PC-9 (cell line): ENCODE measurements at regions of chr7 and their contacts with region 1.

Region 1: GRCh38 chr7:83704561-83704960 is 55.6 kb upstream of the SEMA3E start:
- DNase-seq: peak; percentile 59 to 92
- H3K4me3 ChIP-seq: peak overlapping the region; percentile 28; the same call in 1 of the 2 replicates
- H3K27ac ChIP-seq: peak overlapping the region; percentile 85
- H3K4me1 ChIP-seq: peaks cover 28% of the 10 kb centered on the region
- H3K27me3 ChIP-seq: no peaks in the 10 kb centered on the region
- CTCF ChIP-seq: no peak

Region 2: DNA sequence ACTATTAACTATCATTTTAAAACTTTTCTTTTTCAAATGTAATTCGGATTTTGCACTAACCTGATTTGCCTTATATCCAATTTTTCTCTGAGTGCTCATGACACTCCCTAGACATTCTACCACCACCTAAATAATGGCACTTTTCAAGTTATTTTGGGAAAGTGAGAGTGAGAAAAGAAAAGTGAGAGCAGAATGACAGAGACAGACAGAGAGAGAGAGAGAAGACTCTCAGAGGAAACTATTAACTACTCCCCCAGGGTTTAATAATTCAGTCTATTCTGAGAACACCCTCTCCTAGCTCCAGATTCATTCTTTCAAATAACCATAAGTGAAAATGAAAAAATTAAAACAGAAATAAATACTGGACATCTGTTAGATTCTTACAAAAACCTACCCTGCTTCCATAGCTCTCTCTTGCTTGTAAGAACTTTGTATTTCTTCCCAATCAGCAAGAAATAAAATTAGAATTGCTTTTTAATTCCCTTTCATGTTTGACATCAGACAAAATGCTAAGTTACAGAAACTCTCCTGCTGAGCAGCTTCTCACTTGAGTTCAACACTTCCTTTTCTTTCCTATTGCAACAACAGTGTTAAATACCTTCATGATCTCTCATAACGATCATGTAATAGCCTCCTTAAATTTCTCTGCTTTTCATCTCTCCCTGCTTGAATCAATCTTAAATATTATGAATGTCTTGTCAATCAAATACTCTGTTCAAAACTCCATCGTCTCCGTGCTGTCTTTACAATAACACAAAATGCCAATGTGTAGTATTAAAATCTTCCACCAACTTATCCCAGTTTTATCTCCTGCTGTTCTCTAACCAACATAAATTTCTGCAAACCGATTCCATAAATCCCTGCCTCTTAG is 247.3 kb before region 1 on chr7:
- CTCF ChIA-PET with region 1: no interaction called
- POLR2A ChIA-PET with region 1: no interaction called
- intact Hi-C with region 1: no loop called
- DNase-seq: no peak
- H3K4me3 ChIP-seq: no peak overlapping the region
- H3K27ac ChIP-seq: no peak overlapping the region
- H3K4me1 ChIP-seq: no peaks in the 10 kb centered on the region
- H3K27me3 ChIP-seq: no peaks in the 10 kb centered on the region
- CTCF ChIP-seq: no peak

Region 3: GRCh38 chr7:83677180-83677866 is 27.2 kb before region 1 on chr7:
- CTCF ChIA-PET with region 1: no interaction called
- POLR2A ChIA-PET with region 1: interaction called, 8 read pairs
- intact Hi-C with region 1: loop called (anchors 2 kb)
- DNase-seq: peak; percentile 90 to 96
- H3K4me3 ChIP-seq: peak overlapping the region; percentile 28; the same call in 1 of the 2 replicates
- H3K27ac ChIP-seq: peak overlapping the region; percentile 79
- H3K4me1 ChIP-seq: peaks cover 25% of the 10 kb centered on the region
- H3K27me3 ChIP-seq: no peaks in the 10 kb centered on the region
- CTCF ChIP-seq: no peak

Region 4: DNA sequence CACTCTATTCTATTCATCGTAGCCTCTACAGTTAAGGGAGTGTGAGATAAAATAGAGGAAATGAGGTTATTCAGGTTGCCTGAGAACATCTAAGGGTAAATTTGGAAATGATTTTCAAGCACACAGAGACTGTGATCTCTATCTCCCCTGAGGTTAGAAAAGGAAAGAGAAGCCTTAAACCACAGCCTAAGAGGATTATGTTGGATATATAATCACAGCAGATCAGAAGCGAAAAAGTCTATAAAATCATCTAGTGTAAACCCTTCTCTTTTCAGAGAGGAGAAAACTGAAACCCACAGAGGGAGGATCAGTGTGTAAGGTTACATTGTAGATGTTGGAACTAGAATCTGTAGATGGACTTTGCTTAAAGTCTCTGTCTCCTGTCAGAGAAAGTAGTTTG is 35.0 kb after region 1 on chr7:
- CTCF ChIA-PET with region 1: no interaction called
- POLR2A ChIA-PET with region 1: no interaction called
- intact Hi-C with region 1: no loop called
- DNase-seq: no peak
- H3K4me3 ChIP-seq: no peak overlapping the region
- H3K27ac ChIP-seq: no peak overlapping the region
- H3K4me1 ChIP-seq: no peaks in the 10 kb centered on the region
- H3K27me3 ChIP-seq: no peaks in the 10 kb centered on the region
- CTCF ChIP-seq: no peak